ENCODE measurements at regions of chr12 and their contacts with region 1.

Region 1: DNA sequence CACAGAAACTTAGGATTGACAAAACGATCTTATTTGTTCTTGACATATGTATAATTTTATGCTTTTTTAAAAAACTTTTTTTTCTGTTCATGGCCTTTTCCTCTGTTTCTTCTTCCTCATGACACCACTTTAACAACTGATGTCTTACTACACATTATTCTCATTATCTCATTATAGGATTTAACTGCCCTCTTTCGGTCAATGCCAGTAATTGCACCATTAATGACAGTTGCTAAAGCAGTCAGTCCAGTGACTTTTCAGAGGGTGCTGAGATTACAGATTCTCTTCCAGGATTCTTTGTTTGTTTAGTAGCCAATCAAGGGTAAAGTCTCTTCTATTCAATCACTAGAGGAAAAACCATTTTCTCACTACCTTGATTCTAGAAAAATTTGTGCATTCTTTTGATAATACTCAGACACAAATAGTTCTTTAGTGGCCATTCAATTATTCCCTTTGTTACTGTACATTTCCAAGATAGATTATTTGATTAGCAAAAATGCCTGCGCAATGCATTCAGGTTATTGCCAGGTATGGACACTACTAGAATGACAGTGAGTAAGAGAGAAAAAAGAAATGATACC is 50.1 kb downstream of the KLRG1 start:
- DNase-seq: peak; percentile 69
- H3K4me3 ChIP-seq: no peak overlapping the region; a peak in 1 of 4 replicates
- H3K27ac ChIP-seq: no peak overlapping the region
- H3K4me1 ChIP-seq: no peaks in the 10 kb centered on the region
- H3K27me3 ChIP-seq: no peaks in the 10 kb centered on the region
- CTCF ChIP-seq: peak; percentile 79
- EP300 ChIP-seq: no peak
- RAD21 ChIP-seq: peak; percentile 81

Region 2: DNA sequence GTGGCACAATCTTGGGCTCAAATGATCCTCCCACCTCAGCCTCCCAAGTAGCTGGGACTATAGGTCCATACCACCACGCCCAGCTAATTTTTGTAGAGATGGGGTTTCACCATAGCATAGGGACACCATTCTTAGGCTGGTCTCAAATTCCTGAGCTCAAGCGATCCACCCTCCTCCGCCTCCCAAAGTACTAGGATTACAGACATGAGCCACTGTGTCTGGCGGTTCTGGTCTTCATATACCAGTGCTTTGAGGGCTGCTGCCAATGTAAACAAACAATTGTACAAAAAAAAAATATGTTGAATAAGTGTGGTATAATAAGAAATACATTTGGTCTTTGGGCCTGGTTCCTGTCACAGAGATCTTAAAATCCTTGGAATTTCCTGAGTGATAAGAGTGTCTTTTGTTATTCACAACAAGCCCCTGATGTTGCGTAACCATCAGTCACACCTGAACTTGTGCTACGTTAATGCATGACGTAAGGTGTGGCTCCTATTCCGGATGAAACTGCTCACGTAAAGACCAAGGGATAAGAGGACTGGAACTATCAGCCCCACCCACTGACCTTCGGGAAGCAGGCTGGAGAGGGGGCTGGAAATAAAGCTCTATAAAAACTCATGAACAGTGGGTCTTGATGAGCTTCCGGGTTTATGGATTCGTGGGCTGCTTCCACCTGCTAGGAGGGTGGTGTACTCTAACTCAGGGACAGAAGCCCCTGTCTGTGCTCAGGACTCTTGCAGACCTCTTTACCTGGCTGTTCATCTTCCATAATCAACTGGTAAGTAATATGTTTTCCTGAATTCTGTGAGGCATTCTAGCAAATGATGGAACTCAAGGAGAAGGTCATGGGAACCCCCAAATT is 358.2 kb before region 1 on chr12:
- CTCF ChIA-PET with region 1: interaction called, 10 read pairs
- POLR2A ChIA-PET with region 1: no interaction called
- DNase-seq: no peak
- H3K4me3 ChIP-seq: no peak overlapping the region; a peak in 2 of 4 replicates
- H3K27ac ChIP-seq: no peak overlapping the region
- H3K4me1 ChIP-seq: no peaks in the 10 kb centered on the region; a peak in 1 of 4 replicates
- H3K27me3 ChIP-seq: no peaks in the 10 kb centered on the region
- CTCF ChIP-seq: no peak
- EP300 ChIP-seq: no peak
- RAD21 ChIP-seq: no peak

Region 3: DNA sequence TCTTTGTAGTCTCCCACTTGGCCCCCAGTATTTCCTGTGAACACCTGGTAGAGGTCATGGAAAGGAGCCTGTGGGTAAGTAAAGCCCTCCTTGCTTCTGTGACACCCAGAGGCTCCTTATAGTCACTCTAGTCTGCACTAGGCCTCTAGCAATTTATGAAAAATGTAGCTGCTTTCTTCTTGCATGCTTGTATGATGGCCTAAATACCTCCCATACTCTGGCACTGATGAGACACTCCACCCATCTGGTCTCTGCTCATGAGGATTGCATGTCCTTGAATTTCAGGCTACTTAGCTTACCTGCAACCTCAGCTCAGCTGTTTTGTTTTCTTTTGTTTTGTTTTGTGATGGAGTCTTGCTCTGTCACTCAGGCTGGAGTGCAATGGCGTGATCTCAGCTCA is 221.6 kb before region 1 on chr12:
- CTCF ChIA-PET with region 1: no interaction called
- POLR2A ChIA-PET with region 1: no interaction called
- DNase-seq: no peak
- H3K4me3 ChIP-seq: no peak overlapping the region
- H3K27ac ChIP-seq: no peak overlapping the region
- H3K4me1 ChIP-seq: no peaks in the 10 kb centered on the region; a peak in 1 of 4 replicates
- H3K27me3 ChIP-seq: no peaks in the 10 kb centered on the region; the same call in 1 of the 2 replicates
- CTCF ChIP-seq: no peak
- EP300 ChIP-seq: no peak
- RAD21 ChIP-seq: no peak

Region 4: GRCh38 chr12:8949342-8950220 is 89.9 kb before region 1 on chr12 and contains the start of gene M6PR:
- CTCF ChIA-PET with region 1: interaction called, 28 read pairs
- POLR2A ChIA-PET with region 1: no interaction called
- DNase-seq: peak; percentile 90
- H3K4me3 ChIP-seq: peak within 1 kb of the TSS; percentile 97 to 99
- H3K27ac ChIP-seq: peak within 1 kb of the TSS; percentile 96 to 99
- H3K4me1 ChIP-seq: peaks cover 0 to 11% of the 10 kb centered on the region in 2 experiments; a peak in 3 of 4 replicates
- H3K27me3 ChIP-seq: no peaks in the 10 kb centered on the region
- CTCF ChIP-seq: peak; percentile 60
- EP300 ChIP-seq: no peak; a peak in 1 of 4 replicates
- RAD21 ChIP-seq: peak; percentile 55
- polyA plus RNA-seq, gene M6PR: 132 and 196 TPM in 2 replicates

Region 5: DNA sequence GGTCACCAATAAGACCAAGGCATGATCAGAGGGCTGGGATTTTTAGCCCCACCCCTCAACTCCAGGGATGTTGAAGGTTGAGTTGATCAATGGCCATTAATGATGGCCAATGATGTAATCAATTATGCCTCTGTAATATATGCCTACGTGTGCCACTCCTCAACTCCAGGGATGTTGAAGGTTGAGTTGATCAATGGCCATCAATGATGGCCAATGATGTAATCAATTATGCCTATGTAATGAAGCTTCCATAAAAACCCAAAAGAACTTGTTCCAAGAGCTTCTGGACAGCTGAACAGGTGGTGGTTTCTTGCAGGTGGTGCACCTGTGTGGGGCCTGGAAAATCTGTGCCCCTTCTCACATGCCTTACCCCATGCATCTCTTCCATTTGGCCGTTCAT is 16.9 kb before region 1 on chr12:
- CTCF ChIA-PET with region 1: interaction called, 11 read pairs
- POLR2A ChIA-PET with region 1: no interaction called
- DNase-seq: no peak
- H3K4me3 ChIP-seq: no peak overlapping the region
- H3K27ac ChIP-seq: no peak overlapping the region
- H3K4me1 ChIP-seq: no peaks in the 10 kb centered on the region
- H3K27me3 ChIP-seq: no peaks in the 10 kb centered on the region
- CTCF ChIP-seq: no peak
- EP300 ChIP-seq: no peak
- RAD21 ChIP-seq: no peak

Region 6: GRCh38 chr12:9132008-9132535 is 92.6 kb after region 1 on chr12:
- CTCF ChIA-PET with region 1: no interaction called
- POLR2A ChIA-PET with region 1: no interaction called
- DNase-seq: no peak
- H3K4me3 ChIP-seq: no peak overlapping the region
- H3K27ac ChIP-seq: no peak overlapping the region
- H3K4me1 ChIP-seq: no peaks in the 10 kb centered on the region
- H3K27me3 ChIP-seq: no peaks in the 10 kb centered on the region
- CTCF ChIP-seq: no peak
- EP300 ChIP-seq: no peak
- RAD21 ChIP-seq: no peak

Measured in SK-N-SH (cell line).